CD8-positive, alpha-beta T cell (primary cell): ENCODE measurements at regions of chr14 and their contacts with region 1.

Region 1: GRCh38 chr14:56474419-56475022 is 105.1 kb upstream of the TMEM260 start:
- DNase-seq: peak in 2 of 9 experiments; percentile 48 to 56
- ATAC-seq: no peak
- H3K4me3 ChIP-seq: no peak overlapping the region
- H3K4me3 Mint-ChIP-seq: no peak overlapping the region
- H3K27ac ChIP-seq: no peak overlapping the region
- H3K27ac Mint-ChIP-seq: no peak overlapping the region
- H3K4me1 ChIP-seq: no peaks in the 10 kb centered on the region
- H3K4me1 Mint-ChIP-seq: no peaks in the 10 kb centered on the region
- H3K27me3 ChIP-seq: no peaks in the 10 kb centered on the region
- H3K27me3 Mint-ChIP-seq: peaks cover 8% of the 10 kb centered on the region
- CTCF ChIP-seq: peak; percentile 74

Region 2: DNA sequence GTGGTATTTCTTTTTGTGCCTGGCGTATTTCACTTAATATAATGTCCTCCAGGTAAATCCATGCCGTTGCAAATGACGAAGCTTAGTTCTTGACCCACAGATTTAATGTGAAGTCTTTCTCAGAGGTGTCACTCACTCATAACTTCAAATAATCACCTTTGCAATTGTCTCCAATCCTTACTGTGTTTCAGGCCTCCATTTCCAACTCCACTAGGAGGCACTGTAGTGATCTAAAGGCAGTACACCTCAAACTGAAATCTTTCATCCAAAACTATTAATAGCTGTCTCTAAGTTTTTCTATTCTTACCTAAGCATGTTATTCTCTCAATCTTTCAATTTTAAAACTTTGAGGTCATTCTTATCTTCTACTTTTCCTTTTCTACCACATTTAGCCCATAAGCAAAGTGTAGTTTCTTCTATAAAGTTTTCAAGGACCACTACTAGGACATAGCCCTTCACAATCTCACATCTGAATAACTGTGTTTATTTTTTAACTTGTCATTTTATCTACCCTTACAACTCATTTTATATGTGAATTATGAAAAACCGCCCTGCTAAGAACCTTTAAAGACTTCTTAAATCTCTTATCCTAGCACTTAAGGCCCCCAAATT is 1228.8 kb before region 1 on chr14:
- CTCF ChIA-PET with region 1: no interaction called
- POLR2A ChIA-PET with region 1: no interaction called
- intact Hi-C with region 1: loop called in 1 of 2 experiments (anchors 10 kb)
- DNase-seq: peak in 5 of 9 experiments; percentile 7 to 66 (median 32)
- ATAC-seq: peak; percentile 52
- H3K4me3 ChIP-seq: no peak overlapping the region
- H3K4me3 Mint-ChIP-seq: no peak overlapping the region
- H3K27ac ChIP-seq: no peak overlapping the region
- H3K27ac Mint-ChIP-seq: no peak overlapping the region
- H3K4me1 ChIP-seq: no peaks in the 10 kb centered on the region
- H3K4me1 Mint-ChIP-seq: no peaks in the 10 kb centered on the region
- H3K27me3 ChIP-seq: no peaks in the 10 kb centered on the region
- H3K27me3 Mint-ChIP-seq: peaks cover 13% of the 10 kb centered on the region
- CTCF ChIP-seq: peak; percentile 61

Region 3: GRCh38 chr14:55707365-55707804 is 767.1 kb before region 1 on chr14:
- CTCF ChIA-PET with region 1: interaction called, 5 read pairs
- POLR2A ChIA-PET with region 1: no interaction called
- intact Hi-C with region 1: loop called in 1 of 2 experiments (anchors 2 kb)
- DNase-seq: peak in 2 of 9 experiments; percentile 25 to 30
- ATAC-seq: no peak
- H3K4me3 ChIP-seq: no peak overlapping the region
- H3K4me3 Mint-ChIP-seq: no peak overlapping the region
- H3K27ac ChIP-seq: no peak overlapping the region
- H3K27ac Mint-ChIP-seq: no peak overlapping the region
- H3K4me1 ChIP-seq: no peaks in the 10 kb centered on the region
- H3K4me1 Mint-ChIP-seq: no peaks in the 10 kb centered on the region
- H3K27me3 ChIP-seq: no peaks in the 10 kb centered on the region
- H3K27me3 Mint-ChIP-seq: no peaks in the 10 kb centered on the region
- CTCF ChIP-seq: no peak

Region 4: DNA sequence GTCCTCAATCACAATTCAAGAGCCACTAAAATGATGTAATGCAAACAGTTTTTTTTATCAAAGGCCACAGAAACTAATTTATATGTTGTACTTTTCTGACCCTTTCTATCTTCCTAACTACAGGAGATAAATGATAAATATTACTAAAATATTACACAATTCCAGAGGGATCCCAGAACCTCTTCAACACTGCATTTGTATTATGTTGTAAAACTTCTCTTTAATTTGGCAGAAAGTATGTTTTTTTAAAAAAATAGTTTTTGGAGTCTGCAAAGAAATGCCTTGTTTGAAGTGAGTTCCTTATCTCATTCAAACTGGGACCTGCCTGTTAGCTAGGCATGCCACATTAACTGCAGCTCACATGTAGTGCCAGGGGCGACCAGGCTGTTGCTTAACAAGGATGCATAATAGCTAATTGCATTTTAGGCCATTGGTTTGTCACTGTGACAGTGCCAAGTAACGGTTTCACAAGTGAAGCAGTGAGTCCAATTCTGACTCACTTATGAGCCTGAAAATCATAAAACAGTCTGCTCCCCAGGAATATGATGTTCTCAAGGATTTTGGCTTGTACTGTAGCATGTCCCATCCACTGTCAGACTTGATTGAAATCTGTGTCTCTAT is 627.6 kb before region 1 on chr14:
- CTCF ChIA-PET with region 1: interaction called, 3 read pairs
- POLR2A ChIA-PET with region 1: no interaction called
- intact Hi-C with region 1: loop called in 1 of 2 experiments (anchors 10 kb)
- DNase-seq: no peak
- ATAC-seq: no peak
- H3K4me3 ChIP-seq: no peak overlapping the region
- H3K4me3 Mint-ChIP-seq: no peak overlapping the region
- H3K27ac ChIP-seq: no peak overlapping the region
- H3K27ac Mint-ChIP-seq: no peak overlapping the region
- H3K4me1 ChIP-seq: no peaks in the 10 kb centered on the region
- H3K4me1 Mint-ChIP-seq: no peaks in the 10 kb centered on the region
- H3K27me3 ChIP-seq: no peaks in the 10 kb centered on the region
- H3K27me3 Mint-ChIP-seq: no peaks in the 10 kb centered on the region
- CTCF ChIP-seq: no peak